ENCODE measurements at regions of chr13 and their contacts with region 1.

Region 1: DNA sequence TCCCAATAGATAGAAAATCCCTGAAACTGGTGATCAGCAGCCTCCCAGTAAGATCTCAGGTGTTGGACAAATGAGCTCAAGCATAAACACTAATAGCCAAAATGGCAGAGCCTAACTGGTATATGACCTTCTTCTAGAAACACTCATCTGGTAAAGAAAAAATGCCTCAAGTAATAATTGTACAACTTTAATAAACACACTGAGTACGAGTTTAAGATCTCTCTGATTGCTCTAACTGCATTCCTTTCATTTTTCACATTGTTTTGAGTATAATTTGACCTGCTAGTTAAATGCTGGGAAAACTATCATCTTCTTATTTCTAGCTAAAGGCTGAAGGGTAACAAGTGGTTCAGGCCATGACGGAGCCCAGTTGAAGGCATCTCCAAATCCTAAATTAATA is 2009.5 kb upstream of the PCDH20 start:
- DNase-seq: no peak
- H3K4me3 ChIP-seq: no peak overlapping the region
- H3K27ac ChIP-seq: no peak overlapping the region
- H3K4me1 ChIP-seq: no peaks in the 10 kb centered on the region
- CTCF ChIP-seq: no peak

Region 2: DNA sequence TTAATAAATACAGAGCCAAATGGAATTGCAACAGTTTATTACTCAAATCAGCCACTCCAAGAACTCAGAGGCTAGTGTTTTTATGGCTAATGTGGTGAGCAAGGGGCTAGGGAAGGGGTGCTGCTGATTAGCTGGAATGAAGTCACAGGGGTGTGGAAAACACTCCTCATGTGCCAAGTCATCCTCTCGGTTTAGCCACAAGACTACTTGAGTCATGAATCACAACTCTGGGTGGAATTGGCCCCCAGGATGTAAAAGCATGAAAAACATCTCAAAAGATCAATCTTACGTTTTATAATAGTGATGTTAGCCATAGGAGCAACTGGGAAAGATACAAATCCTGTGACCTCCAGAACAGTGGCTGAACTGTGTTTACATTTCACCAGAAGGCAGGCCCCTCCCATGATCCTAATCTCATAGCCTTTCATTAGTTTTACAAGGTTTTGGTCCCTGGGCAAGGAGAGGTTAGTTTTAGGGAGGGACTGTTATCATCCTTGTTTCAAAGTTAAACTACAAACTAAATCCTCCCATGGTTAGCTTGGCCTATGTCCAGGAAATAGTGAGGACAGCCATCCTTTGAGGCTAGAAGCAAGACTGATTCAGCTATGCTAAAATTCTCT is 10.6 kb after region 1 on chr13:
- CTCF ChIA-PET with region 1: no interaction called
- POLR2A ChIA-PET with region 1: interaction called, 10 read pairs
- intact Hi-C with region 1: no loop called
- DNase-seq: no peak
- H3K4me3 ChIP-seq: no peak overlapping the region
- H3K27ac ChIP-seq: no peak overlapping the region
- H3K4me1 ChIP-seq: no peaks in the 10 kb centered on the region
- CTCF ChIP-seq: no peak

Measured in OCI-LY7 (cell line).